ENCODE measurements at regions of chr7 and their contacts with region 1.

Region 1: GRCh38 chr7:54596747-54597146 is 54.6 kb downstream of the VSTM2A start:
- DNase-seq: no peak
- ATAC-seq: no peak
- H3K4me3 Mint-ChIP-seq: no peak overlapping the region
- H3K27ac Mint-ChIP-seq: no peak overlapping the region
- H3K4me1 Mint-ChIP-seq: no peaks in the 10 kb centered on the region
- H3K27me3 Mint-ChIP-seq: no peaks in the 10 kb centered on the region

Region 2: DNA sequence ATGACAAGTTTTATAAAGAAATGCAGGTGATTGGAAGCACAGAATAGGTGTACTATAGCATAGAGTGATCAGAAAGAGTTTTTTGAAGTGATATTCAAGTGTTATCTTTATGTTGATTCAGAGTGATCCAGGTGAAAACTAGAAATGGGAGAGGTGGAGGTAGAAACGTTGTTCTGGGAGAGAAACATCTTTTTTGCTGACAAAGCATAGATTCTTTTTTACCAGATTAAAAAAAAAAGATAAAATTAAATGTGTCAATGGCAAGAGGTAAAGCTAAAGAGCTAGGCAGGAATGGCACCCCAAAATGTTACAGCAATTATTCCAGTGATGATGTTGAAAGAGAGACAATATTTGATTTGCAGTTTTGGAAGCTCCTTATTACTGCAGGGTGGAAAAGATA is 67.2 kb before region 1 on chr7:
- CTCF ChIA-PET with region 1: no interaction called
- POLR2A ChIA-PET with region 1: no interaction called
- intact Hi-C with region 1: no loop called
- DNase-seq: no peak
- ATAC-seq: no peak
- H3K4me3 Mint-ChIP-seq: no peak overlapping the region
- H3K27ac Mint-ChIP-seq: no peak overlapping the region
- H3K4me1 Mint-ChIP-seq: no peaks in the 10 kb centered on the region
- H3K27me3 Mint-ChIP-seq: no peaks in the 10 kb centered on the region

Region 3: GRCh38 chr7:54546081-54546985 is 50.4 kb before region 1 on chr7:
- CTCF ChIA-PET with region 1: no interaction called
- POLR2A ChIA-PET with region 1: no interaction called
- intact Hi-C with region 1: loop called in 1 of 2 experiments (anchors 10 kb)
- DNase-seq: peak; percentile 15
- ATAC-seq: no peak
- H3K4me3 Mint-ChIP-seq: no peak overlapping the region
- H3K27ac Mint-ChIP-seq: no peak overlapping the region
- H3K4me1 Mint-ChIP-seq: no peaks in the 10 kb centered on the region
- H3K27me3 Mint-ChIP-seq: peaks cover 34% of the 10 kb centered on the region

Region 4: GRCh38 chr7:54632696-54633095 is 35.9 kb after region 1 on chr7:
- CTCF ChIA-PET with region 1: no interaction called
- POLR2A ChIA-PET with region 1: no interaction called
- intact Hi-C with region 1: no loop called
- DNase-seq: no peak
- ATAC-seq: no peak
- H3K4me3 Mint-ChIP-seq: no peak overlapping the region
- H3K27ac Mint-ChIP-seq: no peak overlapping the region
- H3K4me1 Mint-ChIP-seq: no peaks in the 10 kb centered on the region
- H3K27me3 Mint-ChIP-seq: no peaks in the 10 kb centered on the region

Measured in activated CD4-positive, alpha-beta T cell treated with anti-CD3 and anti-CD28 coated beads for 36 hours (primary cell).